WTC11 (cell line): ENCODE measurements at regions of chr15 and their contacts with region 1.

Region 1: DNA sequence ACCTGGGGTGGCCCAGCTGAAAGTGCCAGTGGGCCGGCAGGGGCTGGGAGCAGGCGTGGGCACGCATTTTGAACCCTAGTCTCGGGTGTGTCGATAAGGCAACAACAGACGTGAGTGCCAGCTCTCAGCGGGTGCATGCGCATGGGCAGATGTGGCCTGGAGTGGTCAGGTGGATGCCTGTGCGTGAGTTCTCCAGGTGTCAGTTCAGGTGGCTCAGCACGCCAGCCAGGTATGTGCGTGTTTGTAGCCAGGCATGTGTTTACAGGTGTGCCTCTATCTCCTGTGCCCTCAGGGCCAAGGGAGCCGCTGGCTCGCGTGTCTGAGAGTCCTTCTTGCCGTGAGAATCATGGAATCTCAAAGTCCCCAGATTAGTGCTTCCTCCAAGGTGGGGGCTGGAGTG is 14.8 kb downstream of the CYP1A2 start:
- DNase-seq: no peak
- ATAC-seq: no peak
- H3K4me3 Mint-ChIP-seq: no peak overlapping the region
- H3K27ac Mint-ChIP-seq: no peak overlapping the region
- H3K4me1 Mint-ChIP-seq: peaks cover 20% of the 10 kb centered on the region
- H3K27me3 Mint-ChIP-seq: peaks cover 3% of the 10 kb centered on the region; the same call in 1 of the 2 replicates
- CTCF ChIP-seq: no peak

Region 2: GRCh38 chr15:74460871-74461846 is 302.3 kb before region 1 on chr15 and contains the start of gene UBL7:
- CTCF ChIA-PET with region 1: no interaction called
- POLR2A ChIA-PET with region 1: no interaction called
- DNase-seq: peak; percentile 99
- ATAC-seq: peak; percentile 93
- H3K4me3 Mint-ChIP-seq: peak within 1 kb of the TSS; percentile 98
- H3K27ac Mint-ChIP-seq: peak within 1 kb of the TSS; percentile 98
- H3K4me1 Mint-ChIP-seq: peaks cover 20% of the 10 kb centered on the region
- H3K27me3 Mint-ChIP-seq: no peaks in the 10 kb centered on the region
- CTCF ChIP-seq: no peak
- total RNA-seq, gene UBL7: 62.1 to 70.1 TPM (median 70.1 TPM) in 3 replicates

Region 3: DNA sequence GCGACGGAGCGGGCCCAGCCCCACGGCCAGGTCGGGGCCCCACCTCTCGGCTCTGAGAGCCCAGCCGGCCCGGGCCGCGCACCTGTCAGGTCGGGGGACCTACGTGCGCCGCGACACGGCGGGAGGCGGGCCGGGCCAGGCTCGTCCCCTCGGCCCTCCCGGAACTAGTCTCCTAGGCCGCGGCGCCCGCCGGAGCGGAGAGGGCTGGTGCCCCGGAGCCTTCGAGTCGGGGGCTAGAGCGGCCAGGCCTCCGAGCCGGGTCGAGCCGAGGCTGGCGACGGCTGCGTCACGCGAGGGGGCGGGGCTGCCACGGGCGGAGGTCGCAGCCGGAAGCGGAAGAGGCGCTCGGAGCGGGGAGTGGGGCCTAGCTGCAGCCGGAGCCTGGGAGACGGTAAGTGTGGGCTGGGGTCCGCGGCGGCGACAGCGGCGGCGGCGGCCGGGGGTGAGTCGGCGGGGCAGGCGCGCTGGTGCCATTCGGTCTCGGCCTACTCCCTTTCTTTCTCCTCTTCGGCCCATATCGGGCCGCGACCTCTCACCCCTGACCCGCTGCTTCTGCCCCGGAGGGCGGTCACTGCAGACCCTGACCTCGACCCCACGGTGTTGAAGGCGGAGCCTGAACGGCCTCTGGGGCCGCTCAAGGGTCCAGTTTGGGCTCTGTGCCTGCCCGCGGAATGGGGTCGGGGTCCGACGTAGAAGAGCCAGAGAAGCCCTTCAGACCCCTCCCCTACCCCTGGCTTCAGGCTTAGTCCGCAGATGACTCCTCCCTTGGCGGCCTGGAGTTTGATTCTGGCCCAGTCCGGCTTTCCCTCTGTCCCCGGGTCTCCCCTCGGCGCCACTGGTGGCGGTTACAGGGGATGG is 147.7 kb before region 1 on chr15 and contains the start of gene CLK3:
- CTCF ChIA-PET with region 1: interaction called, 78 read pairs
- POLR2A ChIA-PET with region 1: interaction called, 16 read pairs
- DNase-seq: peak; percentile 99
- ATAC-seq: peak; percentile 92
- H3K4me3 Mint-ChIP-seq: peak within 1 kb of the TSS; percentile 86
- H3K27ac Mint-ChIP-seq: peak within 1 kb of the TSS; percentile 95
- H3K4me1 Mint-ChIP-seq: peaks cover 17% of the 10 kb centered on the region
- H3K27me3 Mint-ChIP-seq: peaks cover 22% of the 10 kb centered on the region
- CTCF ChIP-seq: no peak
- total RNA-seq, gene CLK3: 45.2 to 48.1 TPM (median 46.3 TPM) in 3 replicates

Region 4: DNA sequence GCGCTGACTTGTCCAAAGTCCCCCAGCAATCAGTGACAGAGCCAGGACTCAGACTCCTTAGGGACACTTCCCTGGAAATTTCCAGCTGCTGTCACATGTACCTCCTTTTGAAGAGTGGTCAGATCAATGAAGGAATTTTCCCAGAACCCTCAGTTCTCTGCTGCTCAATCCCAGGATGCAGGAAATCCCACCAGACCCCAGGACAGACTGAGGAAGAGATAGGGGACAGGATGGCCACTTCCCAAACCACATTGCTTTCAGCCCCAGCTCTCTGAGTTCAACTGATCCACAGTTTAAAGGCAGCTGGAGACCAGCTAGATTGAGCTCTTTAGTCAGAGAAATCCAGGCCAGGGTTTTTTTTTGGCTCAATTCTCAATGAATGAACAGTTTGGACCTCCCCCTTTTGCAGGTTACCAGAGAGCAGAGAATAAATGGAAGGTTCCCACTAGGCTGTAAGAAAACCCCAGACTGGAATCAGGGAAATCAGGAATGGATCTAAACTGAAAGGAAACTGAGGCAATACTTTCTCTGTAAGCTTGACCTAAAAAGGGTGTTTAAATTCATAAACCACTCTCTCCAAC is 39.6 kb before region 1 on chr15:
- CTCF ChIA-PET with region 1: interaction called, 53 read pairs
- POLR2A ChIA-PET with region 1: interaction called, 17 read pairs
- DNase-seq: no peak
- ATAC-seq: peak; percentile 69
- H3K4me3 Mint-ChIP-seq: no peak overlapping the region
- H3K27ac Mint-ChIP-seq: no peak overlapping the region
- H3K4me1 Mint-ChIP-seq: peaks cover 15% of the 10 kb centered on the region
- H3K27me3 Mint-ChIP-seq: peaks cover 65% of the 10 kb centered on the region
- CTCF ChIP-seq: no peak

Region 5: GRCh38 chr15:74752491-74753020 is 10.9 kb before region 1 on chr15:
- CTCF ChIA-PET with region 1: interaction called, 131 read pairs
- POLR2A ChIA-PET with region 1: interaction called, 11 read pairs
- DNase-seq: no peak
- ATAC-seq: no peak
- H3K4me3 Mint-ChIP-seq: no peak overlapping the region
- H3K27ac Mint-ChIP-seq: no peak overlapping the region
- H3K4me1 Mint-ChIP-seq: peaks cover 7% of the 10 kb centered on the region; the same call in 1 of the 2 replicates
- H3K27me3 Mint-ChIP-seq: peaks cover 1% of the 10 kb centered on the region; the same call in 1 of the 2 replicates
- CTCF ChIP-seq: no peak

Region 6: GRCh38 chr15:74863239-74864056 is 100.0 kb after region 1 on chr15:
- CTCF ChIA-PET with region 1: no interaction called
- POLR2A ChIA-PET with region 1: no interaction called
- DNase-seq: no peak
- ATAC-seq: no peak
- H3K4me3 Mint-ChIP-seq: no peak overlapping the region
- H3K27ac Mint-ChIP-seq: peak overlapping the region; percentile 54
- H3K4me1 Mint-ChIP-seq: peaks cover 14% of the 10 kb centered on the region
- H3K27me3 Mint-ChIP-seq: no peaks in the 10 kb centered on the region
- CTCF ChIP-seq: no peak

Region 7: GRCh38 chr15:74913041-74913440 is 149.6 kb after region 1 on chr15:
- CTCF ChIA-PET with region 1: no interaction called
- POLR2A ChIA-PET with region 1: no interaction called
- DNase-seq: no peak
- ATAC-seq: no peak
- H3K4me3 Mint-ChIP-seq: no peak overlapping the region
- H3K27ac Mint-ChIP-seq: no peak overlapping the region
- H3K4me1 Mint-ChIP-seq: no peaks in the 10 kb centered on the region
- H3K27me3 Mint-ChIP-seq: no peaks in the 10 kb centered on the region
- CTCF ChIP-seq: no peak